ENCODE measurements at regions of chr22 and their contacts with region 1.

Region 1: DNA sequence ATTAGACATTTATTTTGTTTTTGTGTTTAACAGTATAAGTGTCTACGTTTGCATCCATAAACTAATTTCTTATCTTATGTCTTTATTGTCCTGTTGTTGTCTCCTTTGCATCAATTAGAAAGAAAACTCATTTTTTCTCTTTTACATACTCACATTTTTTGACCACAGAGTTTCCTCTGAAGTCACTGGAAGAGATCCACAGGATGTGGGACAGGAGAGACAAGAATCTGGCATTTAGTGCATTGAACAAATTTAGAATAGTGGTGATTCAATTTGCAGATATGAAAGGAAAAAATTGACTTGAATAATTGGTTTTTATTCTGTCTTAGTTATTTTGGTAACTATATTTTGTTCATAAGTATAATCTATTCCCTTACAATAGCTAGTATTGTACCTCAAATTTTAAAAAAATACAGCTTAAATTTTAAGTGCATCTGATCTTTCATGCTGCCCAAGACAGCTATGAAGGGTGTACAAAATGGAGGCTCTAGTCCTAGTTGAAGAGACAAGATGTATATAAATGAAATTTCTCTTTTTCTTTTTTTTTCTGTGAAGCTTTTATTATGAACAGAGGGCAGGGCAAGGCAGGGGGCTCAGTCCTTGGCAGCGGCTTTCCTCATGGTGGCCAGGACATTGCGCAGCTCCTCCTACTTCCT is 24.4 kb downstream of the HORMAD2 start:
- DNase-seq: no peak
- H3K4me3 ChIP-seq: no peak overlapping the region
- H3K27ac ChIP-seq: no peak overlapping the region
- H3K4me1 ChIP-seq: no peaks in the 10 kb centered on the region
- H3K27me3 ChIP-seq: no peaks in the 10 kb centered on the region
- CTCF ChIP-seq: no peak
- POLR2A ChIP-seq: no peak

Region 2: GRCh38 chr22:29603358-29604075 is 501.1 kb before region 1 on chr22 and contains the start of gene NF2:
- intact Hi-C with region 1: no loop called
- DNase-seq: peak; percentile 99
- H3K4me3 ChIP-seq: peak within 1 kb of the TSS; percentile 68 to 95
- H3K27ac ChIP-seq: peak within 1 kb of the TSS; percentile 90 to 91
- H3K4me1 ChIP-seq: peaks cover 3% of the 10 kb centered on the region
- H3K27me3 ChIP-seq: no peaks in the 10 kb centered on the region
- CTCF ChIP-seq: peak in 2 of 4 experiments; percentile 12 to 21
- POLR2A ChIP-seq: peak; percentile 64
- total RNA-seq, gene NF2: 32.3 to 34.7 TPM

Region 3: DNA sequence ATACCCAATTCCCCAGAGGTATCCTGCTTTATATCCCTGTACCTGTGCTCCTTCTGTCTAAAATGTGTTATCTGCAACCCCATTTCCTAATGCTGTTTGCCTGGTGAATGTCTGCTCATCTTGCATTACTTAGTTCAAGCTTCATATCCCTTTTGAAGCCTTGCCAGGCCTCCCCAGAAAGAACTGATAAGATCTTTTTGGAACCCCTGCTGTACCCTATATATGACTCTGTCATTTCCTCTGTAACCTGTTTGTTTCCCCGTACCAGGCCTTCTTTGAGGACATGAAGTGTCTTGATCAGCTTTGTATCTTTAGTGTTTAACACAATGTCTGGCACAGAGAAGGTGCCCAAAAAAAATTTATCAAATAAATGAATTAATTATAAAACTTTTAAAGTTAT is 64.4 kb after region 1 on chr22:
- intact Hi-C with region 1: no loop called
- DNase-seq: no peak
- H3K4me3 ChIP-seq: no peak overlapping the region
- H3K27ac ChIP-seq: no peak overlapping the region
- H3K4me1 ChIP-seq: no peaks in the 10 kb centered on the region
- H3K27me3 ChIP-seq: no peaks in the 10 kb centered on the region
- CTCF ChIP-seq: no peak
- POLR2A ChIP-seq: no peak

Region 4: DNA sequence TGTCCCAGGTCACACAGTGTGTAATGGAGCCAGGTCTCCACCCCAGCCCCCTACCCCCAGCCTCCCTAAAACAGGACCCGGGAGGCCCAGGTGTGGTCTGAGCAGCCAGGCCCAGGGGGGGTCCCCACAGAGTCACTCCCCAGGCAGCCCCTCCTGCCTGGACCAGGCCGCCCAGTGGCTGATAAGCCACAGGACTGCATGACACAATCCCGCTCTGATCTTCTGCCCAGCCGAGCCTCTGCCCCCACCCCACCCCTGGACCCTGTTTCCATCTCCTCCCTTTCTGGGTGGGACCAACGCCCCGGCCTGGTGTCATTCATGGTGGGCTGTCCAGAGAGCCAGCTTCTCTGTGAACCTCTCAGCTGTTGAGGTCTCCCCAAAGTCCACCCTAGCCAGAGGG is 149.7 kb after region 1 on chr22:
- intact Hi-C with region 1: loop called (anchors 2 kb)
- DNase-seq: no peak
- H3K4me3 ChIP-seq: no peak overlapping the region
- H3K27ac ChIP-seq: no peak overlapping the region
- H3K4me1 ChIP-seq: peaks cover 3% of the 10 kb centered on the region
- H3K27me3 ChIP-seq: no peaks in the 10 kb centered on the region
- CTCF ChIP-seq: no peak
- POLR2A ChIP-seq: no peak

Region 5: GRCh38 chr22:30485362-30485988 is 380.8 kb after region 1 on chr22:
- intact Hi-C with region 1: loop called (anchors 10 kb)
- DNase-seq: peak; percentile 53
- H3K4me3 ChIP-seq: no peak overlapping the region
- H3K27ac ChIP-seq: no peak overlapping the region
- H3K4me1 ChIP-seq: no peaks in the 10 kb centered on the region
- H3K27me3 ChIP-seq: no peaks in the 10 kb centered on the region
- CTCF ChIP-seq: peak; percentile 87 to 97 (median 92)
- POLR2A ChIP-seq: no peak

Measured in prostate gland (tissue), 2 donors.